AG04449 (cell line): ENCODE measurements at regions of chr12 and their contacts with region 1.

Region 1: DNA sequence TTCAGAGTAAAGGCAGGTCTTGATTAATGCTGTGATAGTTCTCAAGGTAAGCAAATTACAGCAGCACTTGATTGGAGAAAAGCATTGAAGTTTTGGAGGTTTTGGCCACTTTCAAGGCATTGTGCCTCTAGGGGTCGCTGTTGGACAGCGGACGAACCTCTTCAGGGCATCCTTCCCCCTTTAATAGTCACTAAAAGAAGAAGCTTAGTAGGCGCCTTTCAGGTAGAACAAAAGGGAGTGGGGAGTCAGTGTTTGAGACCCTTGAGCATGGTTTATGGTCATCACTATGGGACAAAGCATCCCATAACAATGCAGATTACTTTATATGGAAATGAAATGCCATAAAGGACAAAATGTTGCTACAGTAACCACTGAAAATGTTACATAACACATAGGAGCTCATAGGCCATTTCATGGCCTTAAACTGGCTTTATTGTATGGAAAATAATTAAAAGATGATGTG is 199.5 kb upstream of the DCN start:
- DNase-seq: peak; percentile 17
- H3K4me3 ChIP-seq: peak overlapping the region; percentile 61
- CTCF ChIP-seq: peak; percentile 82

Region 2: GRCh38 chr12:91367234-91367849 is 14.8 kb before region 1 on chr12:
- CTCF ChIA-PET with region 1: interaction called, 23 read pairs
- POLR2A ChIA-PET with region 1: no interaction called
- DNase-seq: no peak
- H3K4me3 ChIP-seq: no peak overlapping the region
- CTCF ChIP-seq: peak; percentile 31

Region 3: GRCh38 chr12:91577586-91578539 is 195.8 kb after region 1 on chr12:
- CTCF ChIA-PET with region 1: interaction called, 10 read pairs
- POLR2A ChIA-PET with region 1: no interaction called
- DNase-seq: no peak
- H3K4me3 ChIP-seq: peak overlapping the region; percentile 16
- CTCF ChIP-seq: peak; percentile 18

Region 4: GRCh38 chr12:92408072-92408900 is 1026.2 kb after region 1 on chr12:
- CTCF ChIA-PET with region 1: interaction called, 41 read pairs
- POLR2A ChIA-PET with region 1: no interaction called
- DNase-seq: no peak
- H3K4me3 ChIP-seq: no peak overlapping the region
- CTCF ChIP-seq: peak; percentile 71

Region 5: GRCh38 chr12:92608151-92609091 is 1226.3 kb after region 1 on chr12:
- CTCF ChIA-PET with region 1: interaction called, 49 read pairs
- POLR2A ChIA-PET with region 1: no interaction called
- DNase-seq: no peak
- H3K4me3 ChIP-seq: no peak overlapping the region
- CTCF ChIP-seq: peak; percentile 51